ENCODE measurements at regions of chr20 and their contacts with region 1.

Region 1: DNA sequence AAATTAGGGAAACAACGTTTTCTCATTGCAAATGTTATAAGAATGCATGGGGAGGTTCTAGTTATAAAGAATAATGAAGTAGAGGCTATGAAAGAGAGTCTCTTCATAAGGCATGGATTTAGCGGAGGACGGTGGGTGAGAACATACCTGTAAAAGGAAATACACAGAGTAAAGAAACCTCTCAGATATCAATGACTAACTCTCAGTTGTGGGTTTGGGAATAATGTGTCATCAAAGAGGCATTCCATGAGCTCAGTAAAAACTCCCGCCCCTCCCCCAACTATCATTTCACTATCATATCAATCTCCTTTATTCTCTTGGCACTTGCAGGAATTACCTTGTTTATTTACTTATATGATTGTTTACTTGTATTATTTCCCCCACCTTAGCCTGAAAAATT is 695.4 kb downstream of the PTPRT start:
- DNase-seq: no peak
- H3K4me3 ChIP-seq: no peak overlapping the region
- H3K27ac ChIP-seq: no peak overlapping the region
- H3K4me1 ChIP-seq: no peaks in the 10 kb centered on the region
- H3K27me3 ChIP-seq: no peaks in the 10 kb centered on the region
- CTCF ChIP-seq: no peak

Region 2: DNA sequence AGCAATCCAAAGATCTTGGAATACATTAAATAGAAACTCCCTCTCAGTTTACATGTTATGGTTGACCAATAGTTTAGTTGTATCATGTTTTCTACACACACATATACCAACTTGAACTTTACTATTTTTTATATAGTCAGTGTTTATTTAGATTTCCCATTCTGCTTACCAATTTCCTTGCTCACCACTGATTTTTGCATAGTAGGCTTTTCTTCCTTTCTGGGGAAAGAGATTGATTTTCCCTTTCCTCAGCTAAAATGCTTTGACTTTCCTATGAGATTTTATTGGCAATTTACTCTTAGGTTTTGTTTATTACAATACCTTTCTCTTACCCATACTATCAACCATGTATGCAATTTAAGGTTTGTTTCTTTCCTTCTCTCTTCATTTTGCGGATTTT is 29.8 kb after region 1 on chr20:
- intact Hi-C with region 1: loop called (anchors 2 kb)
- DNase-seq: no peak
- H3K4me3 ChIP-seq: no peak overlapping the region
- H3K27ac ChIP-seq: no peak overlapping the region
- H3K4me1 ChIP-seq: no peaks in the 10 kb centered on the region
- H3K27me3 ChIP-seq: no peaks in the 10 kb centered on the region
- CTCF ChIP-seq: no peak